WTC11 (cell line): ENCODE measurements at regions of chr2 and their contacts with region 1.

Region 1: GRCh38 chr2:160582490-160583145 is 89.0 kb upstream of the RBMS1 start:
- DNase-seq: no peak
- ATAC-seq: peak; percentile 65
- H3K4me3 Mint-ChIP-seq: no peak overlapping the region
- H3K27ac Mint-ChIP-seq: no peak overlapping the region
- H3K4me1 Mint-ChIP-seq: peaks cover 48% of the 10 kb centered on the region
- H3K27me3 Mint-ChIP-seq: no peaks in the 10 kb centered on the region
- CTCF ChIP-seq: no peak

Region 2: GRCh38 chr2:160269803-160270570 is 312.6 kb before region 1 on chr2:
- CTCF ChIA-PET with region 1: interaction called, 10 read pairs
- POLR2A ChIA-PET with region 1: no interaction called
- DNase-seq: peak; percentile 79
- ATAC-seq: peak; percentile 79
- H3K4me3 Mint-ChIP-seq: peak overlapping the region; percentile 72
- H3K27ac Mint-ChIP-seq: peak overlapping the region; percentile 92
- H3K4me1 Mint-ChIP-seq: peaks cover 36% of the 10 kb centered on the region
- H3K27me3 Mint-ChIP-seq: peaks cover 24% of the 10 kb centered on the region
- CTCF ChIP-seq: no peak

Region 3: DNA sequence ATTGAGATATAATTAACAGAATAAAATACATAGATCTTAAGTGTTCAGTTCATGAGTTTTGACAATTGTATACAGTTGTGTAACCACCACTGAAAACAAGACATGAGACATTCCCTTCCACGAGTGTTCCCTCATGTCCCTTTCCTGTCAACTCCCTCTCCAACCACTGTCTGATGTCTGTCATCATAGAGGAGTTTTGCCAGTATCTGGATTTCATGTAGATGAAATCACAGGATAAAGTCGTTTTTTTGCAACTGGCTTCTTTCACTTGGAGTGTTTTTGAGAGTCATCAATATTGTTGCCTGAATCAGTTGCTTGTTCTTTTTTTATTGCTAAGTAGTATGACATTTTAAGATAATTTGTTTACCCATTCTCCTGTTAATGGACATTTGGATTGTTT is 141.7 kb before region 1 on chr2:
- CTCF ChIA-PET with region 1: no interaction called
- POLR2A ChIA-PET with region 1: no interaction called
- DNase-seq: no peak
- ATAC-seq: no peak
- H3K4me3 Mint-ChIP-seq: no peak overlapping the region
- H3K27ac Mint-ChIP-seq: no peak overlapping the region
- H3K4me1 Mint-ChIP-seq: no peaks in the 10 kb centered on the region
- H3K27me3 Mint-ChIP-seq: peaks cover 5% of the 10 kb centered on the region; the same call in 1 of the 2 replicates
- CTCF ChIP-seq: no peak

Region 4: DNA sequence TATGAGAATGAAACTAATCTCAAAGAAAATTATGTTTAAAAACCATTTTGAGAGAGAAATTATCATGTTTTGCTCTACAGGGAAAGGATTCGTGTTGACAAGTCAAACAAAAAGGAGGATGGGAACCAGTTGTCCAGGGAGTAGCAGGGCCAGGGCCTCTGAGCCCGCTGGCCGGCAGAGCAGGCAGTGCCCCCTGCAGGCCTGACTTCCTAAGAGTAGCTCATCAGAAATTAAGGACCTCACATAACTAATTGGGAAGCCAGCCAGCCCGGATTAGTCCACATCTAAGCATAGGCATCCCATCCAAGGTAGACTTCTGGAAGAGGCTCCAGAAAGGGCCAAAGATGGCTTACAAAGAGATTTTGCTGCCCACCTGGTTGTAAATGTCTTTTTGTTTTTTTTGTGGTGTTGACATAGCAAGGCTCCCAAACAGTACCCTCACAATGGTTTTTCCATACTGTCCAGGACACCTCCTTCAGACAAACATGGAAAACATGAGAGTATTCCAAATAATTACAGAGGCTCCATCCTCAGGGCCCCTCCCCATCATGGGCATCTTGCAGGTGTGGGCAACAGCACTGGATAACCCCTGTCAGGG is 336.4 kb after region 1 on chr2:
- CTCF ChIA-PET with region 1: interaction called, 22 read pairs
- POLR2A ChIA-PET with region 1: no interaction called
- DNase-seq: peak; percentile 75
- ATAC-seq: peak; percentile 92
- H3K4me3 Mint-ChIP-seq: no peak overlapping the region
- H3K27ac Mint-ChIP-seq: no peak overlapping the region
- H3K4me1 Mint-ChIP-seq: peaks cover 36% of the 10 kb centered on the region
- H3K27me3 Mint-ChIP-seq: peaks cover 42% of the 10 kb centered on the region
- CTCF ChIP-seq: peak; percentile 55

Region 5: GRCh38 chr2:160970052-160970965 is 387.7 kb after region 1 on chr2:
- CTCF ChIA-PET with region 1: interaction called, 33 read pairs
- POLR2A ChIA-PET with region 1: no interaction called
- DNase-seq: peak; percentile 29
- ATAC-seq: peak; percentile 91
- H3K4me3 Mint-ChIP-seq: no peak overlapping the region
- H3K27ac Mint-ChIP-seq: peak overlapping the region; percentile 94
- H3K4me1 Mint-ChIP-seq: peaks cover 8% of the 10 kb centered on the region
- H3K27me3 Mint-ChIP-seq: no peaks in the 10 kb centered on the region; the same call in 1 of the 2 replicates
- CTCF ChIP-seq: no peak

Region 6: GRCh38 chr2:161004379-161004778 is 421.8 kb after region 1 on chr2:
- CTCF ChIA-PET with region 1: interaction called, 13 read pairs
- POLR2A ChIA-PET with region 1: no interaction called
- DNase-seq: no peak
- ATAC-seq: no peak
- H3K4me3 Mint-ChIP-seq: no peak overlapping the region
- H3K27ac Mint-ChIP-seq: no peak overlapping the region
- H3K4me1 Mint-ChIP-seq: peaks cover 9% of the 10 kb centered on the region
- H3K27me3 Mint-ChIP-seq: no peaks in the 10 kb centered on the region
- CTCF ChIP-seq: no peak